ENCODE measurements at regions of chr14 and their contacts with region 1.

Region 1: GRCh38 chr14:54572316-54572715 is 5.4 kb downstream of the SAMD4A start:
- DNase-seq: no peak
- ATAC-seq: no peak
- H3K4me3 ChIP-seq: no peak overlapping the region
- H3K27ac ChIP-seq: peak overlapping the region; percentile 99
- H3K4me1 ChIP-seq: peaks cover 80% of the 10 kb centered on the region
- H3K27me3 ChIP-seq: no peaks in the 10 kb centered on the region
- CTCF ChIP-seq: peak; percentile 37

Region 2: GRCh38 chr14:54529811-54530210 is 42.5 kb before region 1 on chr14:
- intact Hi-C with region 1: no loop called
- DNase-seq: no peak
- ATAC-seq: no peak
- H3K4me3 ChIP-seq: no peak overlapping the region
- H3K27ac ChIP-seq: no peak overlapping the region
- H3K4me1 ChIP-seq: no peaks in the 10 kb centered on the region
- H3K27me3 ChIP-seq: no peaks in the 10 kb centered on the region
- CTCF ChIP-seq: no peak

Region 3: DNA sequence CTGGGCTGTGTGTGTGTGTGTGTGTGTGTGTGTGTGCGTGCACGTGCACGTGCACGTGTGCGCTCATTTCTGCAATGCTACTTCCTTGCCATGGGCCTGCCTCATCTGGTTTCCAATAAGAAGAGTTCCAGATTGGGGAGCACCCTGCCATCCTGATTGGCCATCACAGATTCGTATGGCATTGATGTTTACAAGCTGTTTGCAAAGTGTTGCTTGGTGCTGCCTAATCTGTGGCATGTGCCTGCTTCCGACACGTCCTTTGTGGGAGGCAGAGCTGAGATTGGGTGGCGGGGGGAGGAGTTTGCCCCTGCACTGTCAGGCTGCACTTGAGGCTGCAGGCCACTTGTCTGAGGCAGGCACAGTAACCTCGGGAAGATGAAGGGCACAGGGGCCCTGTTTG is 33.9 kb after region 1 on chr14:
- intact Hi-C with region 1: loop called (anchors 5 kb)
- DNase-seq: peak in 1 of 2 donors; percentile 59
- ATAC-seq: peak in 3 of 4 donors; percentile 29 to 45 (median 43)
- H3K4me3 ChIP-seq: no peak overlapping the region
- H3K27ac ChIP-seq: peak overlapping the region; percentile 73
- H3K4me1 ChIP-seq: peaks cover 36% of the 10 kb centered on the region
- H3K27me3 ChIP-seq: no peaks in the 10 kb centered on the region
- CTCF ChIP-seq: no peak

Measured in psoas muscle (tissue), 8 donors.